Activated naive CD4-positive, alpha-beta T cell treated with anti-CD3 and anti-CD28 coated beads for 36 hours (primary cell): ENCODE measurements at regions of chr1 and their contacts with region 1.

Region 1: DNA sequence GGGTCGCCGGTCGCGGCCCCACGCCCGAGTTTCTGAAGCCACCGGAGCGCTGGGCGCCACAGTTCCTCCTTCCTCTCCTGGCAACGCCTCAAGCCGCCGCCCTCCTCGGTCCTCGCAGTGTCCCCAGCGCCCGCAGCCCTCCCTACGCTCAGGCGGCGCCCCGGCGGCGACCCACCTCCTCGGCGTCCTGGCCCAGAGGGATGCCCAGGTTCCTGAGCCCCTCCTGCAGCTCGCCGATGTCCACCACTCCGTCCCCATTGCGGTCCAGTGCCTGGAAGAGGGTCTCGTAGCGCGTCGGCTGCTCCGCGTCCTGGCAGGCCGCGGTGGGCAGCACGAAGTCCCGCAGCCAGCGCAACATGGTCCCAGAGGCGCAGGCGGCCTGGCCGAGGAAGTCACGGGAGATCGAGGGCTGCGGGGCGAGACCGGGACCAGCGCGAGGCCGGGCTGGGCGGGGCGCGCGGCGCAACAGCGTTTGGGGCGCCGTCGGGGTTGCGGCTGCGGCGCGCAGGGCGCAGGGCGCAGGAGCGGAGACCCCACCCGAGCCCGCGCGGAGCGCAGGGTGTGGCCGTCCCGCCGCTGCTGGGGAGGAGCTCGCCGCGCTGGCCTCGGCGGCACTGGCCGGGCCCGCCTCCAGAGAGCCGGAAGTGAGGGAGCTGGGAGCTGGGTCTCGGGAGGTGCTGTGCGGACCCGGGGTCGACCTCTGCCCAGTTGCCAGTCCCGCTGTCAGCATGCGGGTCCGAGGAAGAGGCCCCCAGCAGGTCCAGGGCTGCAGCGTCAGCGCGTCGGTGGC is at the start of gene SLC25A24:
- DNase-seq: peak; percentile 70
- H3K4me3 Mint-ChIP-seq: peak within 1 kb of the TSS; percentile 86
- H3K27ac Mint-ChIP-seq: no peak within 1 kb of the TSS
- H3K4me1 Mint-ChIP-seq: peaks cover 14% of the 10 kb centered on the region
- H3K27me3 Mint-ChIP-seq: no peaks in the 10 kb centered on the region
- total RNA-seq, gene SLC25A24: 5.2 to 5.5 TPM

Region 2: DNA sequence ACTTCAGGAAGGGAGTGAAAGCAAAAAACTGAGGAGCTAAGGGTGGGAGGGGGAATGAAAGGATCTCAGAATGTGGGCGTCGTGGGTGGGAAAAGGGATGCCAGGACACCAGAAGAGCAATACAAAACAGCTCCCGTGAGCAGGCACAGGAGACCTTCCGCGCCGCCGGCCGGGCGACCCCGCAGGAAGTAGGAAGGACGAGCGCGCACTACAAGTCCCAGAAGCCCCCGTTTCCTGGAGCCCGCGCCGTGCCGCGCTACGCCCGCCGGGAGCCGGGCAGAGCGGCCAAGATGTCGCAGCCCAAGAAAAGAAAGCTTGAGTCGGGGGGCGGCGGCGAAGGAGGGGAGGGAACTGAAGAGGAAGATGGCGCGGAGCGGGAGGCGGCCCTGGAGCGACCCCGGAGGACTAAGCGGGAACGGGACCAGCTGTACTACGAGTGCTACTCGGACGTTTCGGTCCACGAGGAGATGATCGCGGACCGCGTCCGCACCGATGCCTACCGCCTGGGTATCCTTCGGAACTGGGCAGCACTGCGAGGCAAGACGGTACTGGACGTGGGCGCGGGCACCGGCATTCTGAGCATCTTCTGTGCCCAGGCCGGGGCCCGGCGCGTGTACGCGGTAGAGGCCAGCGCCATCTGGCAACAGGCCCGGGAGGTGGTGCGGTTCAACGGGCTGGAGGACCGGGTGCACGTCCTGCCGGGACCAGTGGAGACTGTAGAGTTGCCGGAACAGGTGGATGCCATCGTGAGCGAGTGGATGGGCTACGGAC is 1143.4 kb before region 1 on chr1 and contains the start of gene PRMT6:
- CTCF ChIA-PET with region 1: no interaction called
- intact Hi-C with region 1: loop called (anchors 5 kb)
- DNase-seq: peak; percentile 84
- H3K4me3 Mint-ChIP-seq: peak within 1 kb of the TSS; percentile 93
- H3K27ac Mint-ChIP-seq: peak within 1 kb of the TSS; percentile 90
- H3K4me1 Mint-ChIP-seq: peaks cover 14% of the 10 kb centered on the region
- H3K27me3 Mint-ChIP-seq: no peaks in the 10 kb centered on the region
- total RNA-seq, gene PRMT6: 6.7 to 7.5 TPM

Region 3: GRCh38 chr1:107897438-107898345 is 302.3 kb before region 1 on chr1:
- CTCF ChIA-PET with region 1: no interaction called
- intact Hi-C with region 1: loop called (anchors 5 kb)
- DNase-seq: no peak
- H3K4me3 Mint-ChIP-seq: peak overlapping the region; percentile 25
- H3K27ac Mint-ChIP-seq: peak overlapping the region; percentile 78
- H3K4me1 Mint-ChIP-seq: peaks cover 40% of the 10 kb centered on the region
- H3K27me3 Mint-ChIP-seq: no peaks in the 10 kb centered on the region

Region 4: GRCh38 chr1:108125312-108126138 is 74.5 kb before region 1 on chr1:
- CTCF ChIA-PET with region 1: interaction called, 8 read pairs
- intact Hi-C with region 1: loop called (anchors 5 kb)
- DNase-seq: peak; percentile 80
- H3K4me3 Mint-ChIP-seq: no peak overlapping the region
- H3K27ac Mint-ChIP-seq: no peak overlapping the region
- H3K4me1 Mint-ChIP-seq: peaks cover 3% of the 10 kb centered on the region
- H3K27me3 Mint-ChIP-seq: no peaks in the 10 kb centered on the region

Region 5: GRCh38 chr1:108316545-108316944 is 116.6 kb after region 1 on chr1:
- CTCF ChIA-PET with region 1: no interaction called
- intact Hi-C with region 1: no loop called
- DNase-seq: no peak
- H3K4me3 Mint-ChIP-seq: no peak overlapping the region
- H3K27ac Mint-ChIP-seq: no peak overlapping the region
- H3K4me1 Mint-ChIP-seq: no peaks in the 10 kb centered on the region
- H3K27me3 Mint-ChIP-seq: peaks cover 15% of the 10 kb centered on the region

Region 6: GRCh38 chr1:108503076-108503740 is 303.2 kb after region 1 on chr1:
- CTCF ChIA-PET with region 1: no interaction called
- intact Hi-C with region 1: loop called (anchors 10 kb)
- DNase-seq: no peak
- H3K4me3 Mint-ChIP-seq: no peak overlapping the region
- H3K27ac Mint-ChIP-seq: no peak overlapping the region
- H3K4me1 Mint-ChIP-seq: no peaks in the 10 kb centered on the region
- H3K27me3 Mint-ChIP-seq: peaks cover 26% of the 10 kb centered on the region